CD4-positive, alpha-beta memory T cell (primary cell): ENCODE measurements at regions of chr12 and their contacts with region 1.

Region 1: DNA sequence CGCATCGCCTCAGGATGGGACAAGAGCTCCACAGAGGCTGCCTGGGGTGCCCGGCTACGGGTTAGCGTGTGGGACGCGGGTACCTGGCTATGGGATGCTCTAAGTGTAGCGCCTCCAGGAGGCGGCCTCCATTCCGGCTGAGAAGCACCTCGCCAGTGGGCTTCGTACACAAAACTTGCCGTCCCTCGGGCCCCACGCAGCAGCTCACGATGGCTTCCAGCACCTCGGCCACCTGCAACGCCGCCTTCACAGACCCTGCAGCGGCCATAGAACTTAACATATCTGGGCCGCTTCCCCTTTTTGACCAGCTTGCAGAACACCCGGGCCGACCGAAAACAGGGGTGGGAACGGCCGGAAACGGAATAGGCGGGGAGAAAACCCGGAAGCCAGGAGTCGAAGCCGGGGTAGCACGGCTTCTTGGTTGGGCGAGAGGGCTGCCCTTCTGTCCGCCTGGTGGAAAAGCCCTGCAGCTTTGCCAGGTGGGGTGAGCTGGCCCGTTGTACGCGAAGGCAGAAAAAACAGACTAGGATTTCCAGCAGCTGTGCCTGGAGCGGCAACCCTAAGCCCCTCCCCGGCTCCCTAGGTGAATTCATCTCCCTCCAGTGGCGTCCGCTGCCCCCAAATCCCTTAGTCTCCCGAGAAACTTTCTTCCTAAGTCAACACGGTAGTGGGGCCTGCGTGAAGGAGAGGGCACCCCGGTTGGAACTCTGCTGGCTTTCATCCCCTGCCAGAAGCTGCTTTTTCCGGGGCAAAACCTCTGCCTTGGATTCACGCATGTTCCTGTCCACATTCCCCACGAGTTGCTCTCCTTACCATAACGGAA is at the start of gene BBS10:
- DNase-seq: peak; percentile 83 to 89 (median 85)
- H3K4me3 ChIP-seq: peak within 1 kb of the TSS; percentile 64 to 82
- H3K4me3 Mint-ChIP-seq: peak within 1 kb of the TSS; percentile 95 to 99 (median 96)
- H3K27ac ChIP-seq: peak within 1 kb of the TSS; percentile 63
- H3K27ac Mint-ChIP-seq: peak within 1 kb of the TSS; percentile 90 to 97 (median 94)
- H3K4me1 ChIP-seq: peaks cover 23% of the 10 kb centered on the region
- H3K4me1 Mint-ChIP-seq: peaks cover 13 to 43% (median 23%) of the 10 kb centered on the region in 4 donors
- H3K27me3 ChIP-seq: no peaks in the 10 kb centered on the region
- H3K27me3 Mint-ChIP-seq: no peaks in the 10 kb centered on the region
- total RNA-seq, gene BBS10: 11.5 to 12.6 TPM

Region 2: DNA sequence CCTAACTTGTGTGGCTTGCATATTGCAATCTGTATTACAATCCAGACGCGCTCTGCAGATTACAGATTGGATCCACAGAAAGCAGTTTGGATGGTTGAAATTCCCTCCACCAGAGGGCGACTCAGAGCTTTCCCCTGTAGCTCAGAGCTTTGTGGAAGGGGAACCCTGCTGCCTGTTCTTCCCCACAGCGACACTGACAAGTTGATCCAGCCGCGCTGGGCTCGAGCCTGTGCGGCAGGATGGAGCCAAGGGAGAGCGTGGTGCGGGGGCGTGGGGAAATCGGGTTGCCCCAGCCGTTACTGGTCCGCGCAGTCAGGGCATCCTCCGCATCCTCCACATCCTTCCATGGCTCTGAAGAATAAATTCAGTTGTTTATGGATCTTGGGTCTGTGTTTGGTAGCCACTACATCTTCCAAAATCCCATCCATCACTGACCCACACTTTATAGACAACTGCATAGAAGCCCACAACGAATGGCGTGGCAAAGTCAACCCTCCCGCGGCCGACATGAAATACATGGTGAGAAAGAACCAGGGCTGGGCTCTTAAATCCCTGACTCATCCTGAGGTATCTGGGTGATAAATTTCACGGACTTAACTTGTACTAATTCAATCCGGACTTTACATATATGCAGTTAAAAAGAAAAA is 1013.8 kb before region 1 on chr12 and contains the start of gene GLIPR1L1:
- CTCF ChIA-PET with region 1: no interaction called
- POLR2A ChIA-PET with region 1: interaction called, 3 read pairs
- intact Hi-C with region 1: loop called (anchors 10 kb)
- DNase-seq: peak; percentile 76 to 82 (median 77)
- H3K4me3 ChIP-seq: peak within 1 kb of the TSS in 1 of 2 donors; percentile 54
- H3K4me3 Mint-ChIP-seq: peak within 1 kb of the TSS; percentile 70 to 86 (median 80)
- H3K27ac ChIP-seq: no peak within 1 kb of the TSS
- H3K27ac Mint-ChIP-seq: peak within 1 kb of the TSS in 1 of 7 donors; percentile 54
- H3K4me1 ChIP-seq: peaks cover 21% of the 10 kb centered on the region
- H3K4me1 Mint-ChIP-seq: peaks cover 13 to 21% (median 17%) of the 10 kb centered on the region in 4 donors
- H3K27me3 ChIP-seq: peaks cover 6% of the 10 kb centered on the region
- H3K27me3 Mint-ChIP-seq: peaks cover 6 to 12% of the 10 kb centered on the region in 2 donors
- total RNA-seq, gene GLIPR1L1: not detected

Region 3: GRCh38 chr12:75526655-75527511 is 821.4 kb before region 1 on chr12:
- CTCF ChIA-PET with region 1: interaction called, 7 read pairs
- POLR2A ChIA-PET with region 1: no interaction called
- intact Hi-C with region 1: loop called (anchors 1 kb)
- DNase-seq: peak in 4 of 5 donors; percentile 32 to 42 (median 40)
- H3K4me3 ChIP-seq: no peak overlapping the region
- H3K4me3 Mint-ChIP-seq: no peak overlapping the region
- H3K27ac ChIP-seq: no peak overlapping the region
- H3K27ac Mint-ChIP-seq: no peak overlapping the region
- H3K4me1 ChIP-seq: no peaks in the 10 kb centered on the region
- H3K4me1 Mint-ChIP-seq: peaks cover 0 to 2% (median 0%) of the 10 kb centered on the region in 4 donors
- H3K27me3 ChIP-seq: no peaks in the 10 kb centered on the region
- H3K27me3 Mint-ChIP-seq: peaks cover 5 to 22% of the 10 kb centered on the region in 2 donors

Region 4: DNA sequence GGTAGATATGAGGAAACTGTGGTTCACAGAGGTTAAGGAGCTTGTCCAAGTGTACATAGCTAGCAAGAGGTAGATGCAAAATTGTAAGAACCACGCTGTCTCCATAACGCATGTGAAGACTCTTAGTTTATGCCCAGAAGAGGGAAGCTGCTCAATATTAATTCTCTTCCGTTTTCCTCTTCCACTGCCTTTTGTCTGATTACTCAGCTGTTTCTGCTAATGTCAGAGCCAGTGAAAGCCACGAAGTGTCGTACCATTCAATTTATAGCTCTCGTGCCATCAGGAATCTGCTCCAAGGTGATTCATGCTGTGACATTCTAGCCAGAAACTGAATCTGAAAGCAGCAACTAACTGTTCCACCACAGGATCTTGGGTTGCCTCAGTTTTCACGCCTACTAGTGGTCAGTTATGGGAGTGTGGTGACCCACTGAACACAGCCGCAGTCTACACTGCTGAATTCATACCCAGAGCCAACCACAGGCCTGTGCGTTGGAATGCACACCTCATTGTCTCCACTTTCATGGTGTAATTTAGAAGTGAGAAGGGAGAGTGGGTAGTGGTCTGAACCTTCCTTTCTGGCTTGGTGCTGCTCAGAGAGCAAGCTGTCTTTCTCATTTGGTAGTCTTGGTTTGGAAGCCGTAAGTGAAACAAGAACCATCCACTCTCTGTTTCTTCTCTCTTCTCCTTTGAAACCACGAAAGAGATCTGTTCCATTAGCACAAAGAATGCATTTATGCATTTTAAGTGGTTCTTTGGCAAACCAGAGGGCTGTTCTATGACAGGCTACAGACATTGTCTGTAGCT is 189.6 kb before region 1 on chr12:
- CTCF ChIA-PET with region 1: no interaction called
- POLR2A ChIA-PET with region 1: no interaction called
- intact Hi-C with region 1: loop called (anchors 5 kb)
- DNase-seq: peak; percentile 46 to 57 (median 51)
- H3K4me3 ChIP-seq: peak overlapping the region in 1 of 2 donors; percentile 20
- H3K4me3 Mint-ChIP-seq: peak overlapping the region; percentile 68 to 77 (median 75)
- H3K27ac ChIP-seq: no peak overlapping the region
- H3K27ac Mint-ChIP-seq: peak overlapping the region in 6 of 7 donors; percentile 2 to 83 (median 70)
- H3K4me1 ChIP-seq: no peaks in the 10 kb centered on the region
- H3K4me1 Mint-ChIP-seq: peaks cover 8 to 11% (median 10%) of the 10 kb centered on the region in 4 donors
- H3K27me3 ChIP-seq: no peaks in the 10 kb centered on the region
- H3K27me3 Mint-ChIP-seq: no peaks in the 10 kb centered on the region

Region 5: GRCh38 chr12:76366163-76366562 is 17.9 kb after region 1 on chr12:
- CTCF ChIA-PET with region 1: no interaction called
- POLR2A ChIA-PET with region 1: no interaction called
- intact Hi-C with region 1: no loop called
- DNase-seq: no peak
- H3K4me3 ChIP-seq: no peak overlapping the region
- H3K4me3 Mint-ChIP-seq: no peak overlapping the region
- H3K27ac ChIP-seq: no peak overlapping the region
- H3K27ac Mint-ChIP-seq: peak overlapping the region in 1 of 7 donors; percentile 35
- H3K4me1 ChIP-seq: no peaks in the 10 kb centered on the region
- H3K4me1 Mint-ChIP-seq: peaks cover 0 to 7% (median 1%) of the 10 kb centered on the region in 4 donors
- H3K27me3 ChIP-seq: no peaks in the 10 kb centered on the region
- H3K27me3 Mint-ChIP-seq: no peaks in the 10 kb centered on the region

Region 6: GRCh38 chr12:76559400-76560085 is 211.3 kb after region 1 on chr12 and contains the start of gene OSBPL8:
- CTCF ChIA-PET with region 1: no interaction called
- POLR2A ChIA-PET with region 1: interaction called, 20 read pairs
- intact Hi-C with region 1: loop called (anchors 1 kb)
- DNase-seq: peak; percentile 89 to 94 (median 90)
- H3K4me3 ChIP-seq: peak within 1 kb of the TSS; percentile 95
- H3K4me3 Mint-ChIP-seq: peak within 1 kb of the TSS; percentile 96 to 97 (median 96)
- H3K27ac ChIP-seq: peak within 1 kb of the TSS; percentile 89
- H3K27ac Mint-ChIP-seq: peak within 1 kb of the TSS; percentile 94 to 99 (median 98)
- H3K4me1 ChIP-seq: peaks cover 46% of the 10 kb centered on the region
- H3K4me1 Mint-ChIP-seq: peaks cover 24 to 52% (median 31%) of the 10 kb centered on the region in 4 donors
- H3K27me3 ChIP-seq: no peaks in the 10 kb centered on the region
- H3K27me3 Mint-ChIP-seq: no peaks in the 10 kb centered on the region
- total RNA-seq, gene OSBPL8: 126 to 127 TPM

Region 7: GRCh38 chr12:76763743-76764675 is 415.7 kb after region 1 on chr12 and contains the start of gene ZDHHC17:
- CTCF ChIA-PET with region 1: no interaction called
- POLR2A ChIA-PET with region 1: interaction called, 5 read pairs
- intact Hi-C with region 1: loop called (anchors 1 kb)
- DNase-seq: peak; percentile 92 to 94 (median 93)
- H3K4me3 ChIP-seq: peak within 1 kb of the TSS; percentile 54 to 78
- H3K4me3 Mint-ChIP-seq: peak within 1 kb of the TSS; percentile 97 to 98 (median 98)
- H3K27ac ChIP-seq: peak within 1 kb of the TSS; percentile 90
- H3K27ac Mint-ChIP-seq: peak within 1 kb of the TSS; percentile 95 to 99 (median 98)
- H3K4me1 ChIP-seq: peaks cover 36% of the 10 kb centered on the region
- H3K4me1 Mint-ChIP-seq: peaks cover 21 to 53% (median 35%) of the 10 kb centered on the region in 4 donors
- H3K27me3 ChIP-seq: no peaks in the 10 kb centered on the region
- H3K27me3 Mint-ChIP-seq: no peaks in the 10 kb centered on the region
- total RNA-seq, gene ZDHHC17: 51.5 to 52.9 TPM

Region 8: GRCh38 chr12:77065361-77066204 is 717.3 kb after region 1 on chr12 and contains the start of gene E2F7:
- CTCF ChIA-PET with region 1: no interaction called
- POLR2A ChIA-PET with region 1: no interaction called
- intact Hi-C with region 1: loop called (anchors 5 kb)
- DNase-seq: peak; percentile 73 to 81 (median 78)
- H3K4me3 ChIP-seq: peak within 1 kb of the TSS in 1 of 2 donors; percentile 67
- H3K4me3 Mint-ChIP-seq: peak within 1 kb of the TSS; percentile 82 to 91 (median 90)
- H3K27ac ChIP-seq: no peak within 1 kb of the TSS
- H3K27ac Mint-ChIP-seq: peak within 1 kb of the TSS in 6 of 7 donors; percentile 7 to 81 (median 54)
- H3K4me1 ChIP-seq: peaks cover 11% of the 10 kb centered on the region
- H3K4me1 Mint-ChIP-seq: peaks cover 4 to 7% (median 5%) of the 10 kb centered on the region in 4 donors
- H3K27me3 ChIP-seq: no peaks in the 10 kb centered on the region
- H3K27me3 Mint-ChIP-seq: peaks cover 7 to 14% of the 10 kb centered on the region in 2 donors
- total RNA-seq, gene E2F7: 0.17 to 0.26 TPM